ENCODE measurements at regions of chr12 and their contacts with region 1.

Region 1: DNA sequence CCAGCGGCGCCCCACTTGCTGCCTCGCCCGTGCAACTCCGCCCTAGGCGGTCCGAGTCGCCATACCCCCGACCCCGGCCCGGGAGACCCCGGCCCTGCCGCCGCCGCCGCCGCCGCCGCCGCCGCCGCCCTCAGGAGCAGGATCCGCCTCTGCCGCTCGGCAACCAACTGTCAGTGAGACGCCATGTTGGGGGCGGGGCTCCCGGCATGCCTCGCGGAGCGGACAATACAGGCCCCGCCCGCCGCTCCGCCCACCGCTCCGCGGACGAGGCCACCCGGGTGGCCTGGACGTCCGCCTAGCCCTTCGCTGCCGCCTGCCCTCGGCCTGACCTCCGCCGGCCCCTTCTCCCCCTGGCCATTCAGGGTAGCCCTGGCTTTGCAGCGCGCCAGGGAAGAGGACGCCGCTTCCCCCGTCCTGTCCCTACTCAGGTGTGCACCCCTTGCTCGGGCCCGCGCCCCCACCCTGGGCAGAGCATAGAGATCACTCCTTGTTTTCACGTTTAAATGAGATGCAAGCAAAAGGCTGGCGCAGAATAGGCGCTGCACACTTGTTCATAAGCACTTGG is at the start of gene HECTD4:
- DNase-seq: peak; percentile 95 to 99 (median 98)
- H3K4me3 ChIP-seq: peak within 1 kb of the TSS; percentile 70 to 99 (median 90)
- H3K27ac ChIP-seq: peak within 1 kb of the TSS; percentile 4 to 95 (median 89)
- H3K27me3 ChIP-seq: no peaks in the 10 kb centered on the region
- CTCF ChIP-seq: peak in 34 of 56 donors; percentile 5 to 53 (median 32)
- total RNA-seq, gene HECTD4: 133 to 246 (median 192) TPM

Region 2: DNA sequence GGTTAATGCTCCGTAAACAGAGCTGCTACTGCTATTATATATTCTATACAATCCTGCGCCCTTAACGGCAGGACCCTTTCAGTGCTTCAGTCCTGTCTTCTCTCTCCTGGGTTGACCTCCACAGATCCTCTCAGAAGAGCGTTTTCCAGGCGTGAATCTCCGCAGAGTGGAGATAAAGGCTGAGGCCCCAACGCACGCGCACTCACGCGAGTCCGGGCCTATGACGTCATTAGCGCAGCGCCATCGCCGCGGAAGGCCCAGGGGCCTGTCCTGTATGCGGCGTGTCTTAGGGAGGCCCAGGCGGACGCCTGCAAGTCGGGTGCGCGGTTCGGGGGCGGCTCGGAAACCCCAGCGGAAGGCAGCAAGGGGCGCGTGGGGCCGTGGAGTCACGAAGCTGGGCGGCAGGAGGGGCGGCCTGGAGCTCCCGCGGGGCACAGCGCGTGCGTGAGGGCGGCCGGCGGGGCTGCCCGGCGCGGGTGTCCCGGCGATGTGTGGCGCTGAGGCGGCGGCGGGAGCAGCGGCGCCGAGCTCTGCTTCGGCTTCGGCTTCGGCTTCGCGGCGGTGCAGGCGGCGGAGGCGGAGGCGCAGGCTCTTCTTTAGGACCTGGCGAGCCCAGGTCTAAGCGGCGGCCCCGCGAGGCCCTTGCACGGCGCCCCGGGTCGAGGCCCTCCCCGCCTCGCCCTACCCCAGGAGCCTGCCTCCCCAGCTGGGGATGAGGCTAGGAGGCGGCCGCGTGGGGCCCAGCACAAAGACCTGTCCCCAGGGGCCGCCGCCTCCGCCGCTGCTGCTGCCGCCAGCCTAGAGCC is 540.4 kb before region 1 on chr12 and contains the start of gene MAPKAPK5:
- intact Hi-C with region 1: loop called in 1 of 2 experiments (anchors 5 kb)
- DNase-seq: peak; percentile 83 to 93 (median 88)
- H3K4me3 ChIP-seq: peak within 1 kb of the TSS; percentile 67 to 100 (median 93)
- H3K27ac ChIP-seq: peak within 1 kb of the TSS in 58 of 59 donors; percentile 60 to 99 (median 92)
- H3K27me3 ChIP-seq: no peaks in the 10 kb centered on the region
- CTCF ChIP-seq: peak in 33 of 56 donors; percentile 4 to 55 (median 32)
- total RNA-seq, gene MAPKAPK5: 38.5 to 72.8 (median 54.5) TPM

Region 3: DNA sequence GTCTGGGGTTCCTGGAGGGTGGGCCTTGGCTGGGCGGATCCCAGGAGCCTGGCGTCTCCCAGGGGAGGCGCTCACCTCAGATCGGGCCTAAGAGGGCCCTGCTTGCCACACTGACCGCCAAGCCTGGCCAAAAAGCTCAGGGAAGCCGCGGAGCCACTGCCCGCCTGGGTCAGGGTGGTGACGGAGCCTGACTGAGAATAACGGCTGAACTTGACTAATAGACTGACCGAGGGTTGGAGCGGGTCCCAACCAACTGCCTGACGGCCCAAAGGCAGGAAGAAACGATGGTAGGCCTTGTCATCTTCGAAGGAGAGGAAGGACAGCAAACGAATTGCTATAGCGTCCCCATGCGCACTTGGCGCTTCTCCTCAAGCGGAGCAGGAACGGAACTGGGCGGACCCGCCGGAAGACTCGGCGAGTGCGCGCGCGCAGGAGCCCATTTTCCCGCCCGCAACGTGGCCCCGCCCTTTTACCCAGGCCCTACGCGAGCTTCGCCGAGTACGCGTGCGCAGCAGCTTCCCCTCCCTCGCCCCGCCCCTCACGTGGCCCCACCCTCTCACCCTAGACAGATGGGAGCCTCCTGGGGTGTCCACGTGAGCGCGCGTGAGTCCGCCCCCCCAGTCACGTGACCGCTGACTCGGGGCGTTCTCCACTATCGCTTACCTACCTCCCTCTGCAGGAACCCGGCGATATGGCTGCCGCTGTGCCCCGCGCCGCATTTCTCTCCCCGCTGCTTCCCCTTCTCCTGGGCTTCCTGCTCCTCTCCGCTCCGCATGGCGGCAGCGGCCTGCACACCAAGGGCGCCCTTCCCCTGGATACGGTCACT is 369.3 kb before region 1 on chr12 and contains the starts of genes ERP29 and TMEM116:
- intact Hi-C with region 1: loop called (anchors 5 to 10 kb)
- DNase-seq: peak; percentile 99 to 100 (median 99)
- H3K4me3 ChIP-seq: peak within 1 kb of the TSS; percentile 50 to 100 (median 95)
- H3K27ac ChIP-seq: peak within 1 kb of the TSS; percentile 74 to 99 (median 95)
- H3K27me3 ChIP-seq: no peaks in the 10 kb centered on the region
- CTCF ChIP-seq: peak; percentile 8 to 74 (median 51)
- total RNA-seq, gene ERP29: 31.1 to 63.4 (median 46.7) TPM
- total RNA-seq, gene TMEM116: 13.7 to 34.8 (median 21.9) TPM

Region 4: GRCh38 chr12:112125250-112125999 is 256.9 kb before region 1 on chr12 and contains the start of gene TRAFD1:
- intact Hi-C with region 1: loop called in 1 of 2 experiments (anchors 5 kb)
- DNase-seq: peak; percentile 96 to 100 (median 98)
- H3K4me3 ChIP-seq: peak within 1 kb of the TSS; percentile 65 to 99 (median 95)
- H3K27ac ChIP-seq: peak within 1 kb of the TSS; percentile 44 to 97 (median 91)
- H3K27me3 ChIP-seq: no peaks in the 10 kb centered on the region
- CTCF ChIP-seq: peak in 18 of 56 donors; percentile 6 to 39 (median 16)
- total RNA-seq, gene TRAFD1: 15.1 to 47.9 (median 24.8) TPM

Region 5: DNA sequence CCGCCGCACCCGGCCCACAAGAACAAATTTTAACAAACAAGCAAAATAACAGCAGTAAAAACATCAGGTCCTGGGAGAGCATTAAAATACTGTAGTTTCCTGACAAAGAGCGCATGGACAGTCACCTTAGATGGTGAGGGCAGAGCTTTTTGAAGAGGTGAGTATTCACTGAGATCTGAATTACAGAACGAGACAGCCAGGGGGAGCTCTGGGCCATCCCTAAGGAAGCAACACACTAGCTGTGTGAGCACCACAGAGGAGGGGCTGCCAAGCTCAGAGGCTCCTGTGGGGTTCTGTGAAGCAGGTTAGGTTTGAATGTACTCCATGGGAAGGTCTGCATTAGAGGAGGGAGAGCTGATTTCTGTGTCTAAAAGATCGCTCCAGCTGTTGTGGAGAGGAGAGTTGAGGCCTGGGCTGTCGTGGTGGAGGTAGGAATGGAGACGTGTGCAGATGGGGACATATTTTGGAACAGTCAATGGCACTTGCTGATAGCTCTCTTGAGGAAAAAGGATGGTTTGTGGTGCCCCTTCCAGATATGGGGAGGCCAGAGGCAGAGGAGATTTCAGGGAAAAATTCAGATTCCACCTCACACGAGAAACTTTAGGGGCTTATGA is 184.1 kb before region 1 on chr12:
- intact Hi-C with region 1: loop called (anchors 5 kb)
- DNase-seq: peak in 9 of 10 donors; percentile 56 to 86 (median 60)
- H3K4me3 ChIP-seq: no peak overlapping the region
- H3K27ac ChIP-seq: peak overlapping the region in 16 of 59 donors; percentile 3 to 46 (median 28)
- H3K27me3 ChIP-seq: no peaks in the 10 kb centered on the region
- CTCF ChIP-seq: peak in 55 of 56 donors; percentile 34 to 78 (median 66)